CD8-positive, alpha-beta T cell (primary cell): ENCODE measurements at regions of chr14 and their contacts with region 1.

Region 1: GRCh38 chr14:68248481-68249255 is 429.1 kb downstream of the RAD51B start:
- DNase-seq: peak in 3 of 9 experiments; percentile 52 to 79 (median 64)
- ATAC-seq: peak; percentile 79
- H3K4me3 ChIP-seq: no peak overlapping the region
- H3K4me3 Mint-ChIP-seq: no peak overlapping the region
- H3K27ac ChIP-seq: no peak overlapping the region
- H3K27ac Mint-ChIP-seq: peak overlapping the region; percentile 47
- H3K4me1 ChIP-seq: peaks cover 15% of the 10 kb centered on the region
- H3K4me1 Mint-ChIP-seq: peaks cover 30% of the 10 kb centered on the region
- H3K27me3 ChIP-seq: no peaks in the 10 kb centered on the region
- H3K27me3 Mint-ChIP-seq: no peaks in the 10 kb centered on the region
- CTCF ChIP-seq: peak; percentile 67

Region 2: DNA sequence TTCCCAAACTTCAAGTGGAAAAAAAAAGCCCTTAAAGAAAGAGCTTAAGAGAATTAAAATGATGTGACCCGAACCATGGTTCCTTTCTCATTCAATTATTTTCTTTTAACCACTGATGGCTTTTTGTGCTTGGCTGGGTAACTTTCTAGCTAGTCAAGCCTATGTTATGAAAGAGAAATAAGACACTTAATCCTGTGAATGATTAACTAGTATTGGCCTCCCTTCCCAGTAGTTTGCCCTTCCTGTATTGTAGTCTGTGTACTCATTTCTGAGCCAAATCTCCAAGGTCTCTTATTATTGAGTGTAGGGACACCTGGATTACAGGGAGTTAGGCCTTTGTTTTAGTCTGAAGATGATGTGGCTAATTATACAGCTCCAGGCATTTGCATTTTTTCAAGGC is 76.0 kb before region 1 on chr14:
- CTCF ChIA-PET with region 1: no interaction called
- POLR2A ChIA-PET with region 1: no interaction called
- intact Hi-C with region 1: no loop called
- DNase-seq: no peak
- ATAC-seq: no peak
- H3K4me3 ChIP-seq: no peak overlapping the region
- H3K4me3 Mint-ChIP-seq: no peak overlapping the region
- H3K27ac ChIP-seq: no peak overlapping the region
- H3K27ac Mint-ChIP-seq: no peak overlapping the region
- H3K4me1 ChIP-seq: no peaks in the 10 kb centered on the region
- H3K4me1 Mint-ChIP-seq: no peaks in the 10 kb centered on the region
- H3K27me3 ChIP-seq: no peaks in the 10 kb centered on the region
- H3K27me3 Mint-ChIP-seq: no peaks in the 10 kb centered on the region
- CTCF ChIP-seq: no peak

Region 3: GRCh38 chr14:68261092-68261842 is 12.6 kb after region 1 on chr14:
- CTCF ChIA-PET with region 1: interaction called, 12 read pairs
- POLR2A ChIA-PET with region 1: interaction called, 7 read pairs
- intact Hi-C with region 1: no loop called
- DNase-seq: peak in 1 of 9 experiments; percentile 27
- ATAC-seq: no peak
- H3K4me3 ChIP-seq: no peak overlapping the region
- H3K4me3 Mint-ChIP-seq: peak overlapping the region; percentile 54
- H3K27ac ChIP-seq: peak overlapping the region in 1 of 2 experiments; percentile 41
- H3K27ac Mint-ChIP-seq: peak overlapping the region; percentile 91
- H3K4me1 ChIP-seq: peaks cover 48% of the 10 kb centered on the region
- H3K4me1 Mint-ChIP-seq: peaks cover 61% of the 10 kb centered on the region
- H3K27me3 ChIP-seq: no peaks in the 10 kb centered on the region
- H3K27me3 Mint-ChIP-seq: no peaks in the 10 kb centered on the region
- CTCF ChIP-seq: no peak

Region 4: GRCh38 chr14:68408680-68409079 is 160.0 kb after region 1 on chr14:
- CTCF ChIA-PET with region 1: interaction called, 38 read pairs
- POLR2A ChIA-PET with region 1: interaction called, 3 read pairs
- intact Hi-C with region 1: loop called in 1 of 2 experiments (anchors 1 kb)
- DNase-seq: peak in 2 of 9 experiments; percentile 41 to 64
- ATAC-seq: peak; percentile 49
- H3K4me3 ChIP-seq: no peak overlapping the region
- H3K4me3 Mint-ChIP-seq: no peak overlapping the region
- H3K27ac ChIP-seq: no peak overlapping the region
- H3K27ac Mint-ChIP-seq: peak overlapping the region; percentile 4
- H3K4me1 ChIP-seq: peaks cover 25% of the 10 kb centered on the region
- H3K4me1 Mint-ChIP-seq: peaks cover 38% of the 10 kb centered on the region
- H3K27me3 ChIP-seq: no peaks in the 10 kb centered on the region
- H3K27me3 Mint-ChIP-seq: no peaks in the 10 kb centered on the region
- CTCF ChIP-seq: no peak

Region 5: GRCh38 chr14:68685419-68686204 is 436.9 kb after region 1 on chr14:
- CTCF ChIA-PET with region 1: no interaction called
- POLR2A ChIA-PET with region 1: interaction called, 4 read pairs
- intact Hi-C with region 1: loop called (anchors 5 to 10 kb)
- DNase-seq: peak; percentile 67 to 94 (median 84)
- ATAC-seq: peak; percentile 87
- H3K4me3 ChIP-seq: no peak overlapping the region
- H3K4me3 Mint-ChIP-seq: peak overlapping the region; percentile 23
- H3K27ac ChIP-seq: peak overlapping the region; percentile 50 to 70
- H3K27ac Mint-ChIP-seq: peak overlapping the region; percentile 96
- H3K4me1 ChIP-seq: peaks cover 56% of the 10 kb centered on the region
- H3K4me1 Mint-ChIP-seq: peaks cover 70% of the 10 kb centered on the region
- H3K27me3 ChIP-seq: no peaks in the 10 kb centered on the region
- H3K27me3 Mint-ChIP-seq: no peaks in the 10 kb centered on the region
- CTCF ChIP-seq: no peak

Region 6: GRCh38 chr14:68795597-68796417 is 547.1 kb after region 1 on chr14:
- CTCF ChIA-PET with region 1: interaction called, 195 read pairs
- POLR2A ChIA-PET with region 1: interaction called, 54 read pairs
- intact Hi-C with region 1: no loop called
- DNase-seq: peak; percentile 60 to 94 (median 82)
- ATAC-seq: peak; percentile 41
- H3K4me3 ChIP-seq: peak overlapping the region; percentile 94 to 97
- H3K4me3 Mint-ChIP-seq: peak overlapping the region; percentile 92
- H3K27ac ChIP-seq: peak overlapping the region; percentile 99 to 100
- H3K27ac Mint-ChIP-seq: peak overlapping the region; percentile 100
- H3K4me1 ChIP-seq: peaks cover 18% of the 10 kb centered on the region
- H3K4me1 Mint-ChIP-seq: peaks cover 37% of the 10 kb centered on the region
- H3K27me3 ChIP-seq: no peaks in the 10 kb centered on the region
- H3K27me3 Mint-ChIP-seq: no peaks in the 10 kb centered on the region
- CTCF ChIP-seq: peak; percentile 71

Region 7: DNA sequence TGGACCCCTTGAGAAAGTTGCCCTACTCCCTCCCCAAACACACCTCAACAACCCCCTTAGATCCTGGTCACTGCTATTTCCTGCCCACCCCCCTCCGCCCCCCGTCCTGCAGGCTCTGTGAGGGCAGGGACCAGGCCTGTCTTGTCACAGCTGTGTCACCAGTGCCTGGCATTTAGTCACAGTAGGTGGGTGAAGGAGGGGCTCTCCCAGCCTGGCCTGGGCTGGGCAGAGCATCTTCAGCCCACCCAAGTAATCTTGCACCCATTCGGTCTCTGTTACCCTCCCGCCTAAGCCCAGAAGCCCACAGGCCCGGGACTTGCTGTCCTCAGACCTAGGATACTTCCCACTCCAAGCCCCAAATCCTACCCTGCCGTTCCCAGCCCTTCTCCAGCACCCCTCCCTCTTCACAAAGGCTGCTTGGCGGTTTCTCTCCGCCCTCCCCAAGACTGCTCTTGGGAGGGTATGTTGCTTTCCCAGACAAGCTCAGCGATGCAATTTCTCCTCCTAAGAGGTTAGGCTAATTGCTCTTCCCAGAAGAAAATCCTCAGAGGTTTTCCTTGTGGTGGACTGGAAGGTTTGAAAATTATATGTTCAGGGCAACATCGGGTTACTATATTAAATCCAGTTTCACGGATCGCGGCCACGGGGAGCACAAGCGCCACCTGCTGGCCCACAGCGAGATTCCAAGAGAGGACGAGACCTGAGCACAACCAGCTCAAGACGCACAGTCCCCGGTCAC is 595.0 kb after region 1 on chr14:
- CTCF ChIA-PET with region 1: interaction called, 33 read pairs
- POLR2A ChIA-PET with region 1: no interaction called
- intact Hi-C with region 1: loop called (anchors 1 kb)
- DNase-seq: peak; percentile 48 to 85 (median 77)
- ATAC-seq: peak; percentile 89
- H3K4me3 ChIP-seq: no peak overlapping the region
- H3K4me3 Mint-ChIP-seq: peak overlapping the region; percentile 53
- H3K27ac ChIP-seq: no peak overlapping the region
- H3K27ac Mint-ChIP-seq: no peak overlapping the region
- H3K4me1 ChIP-seq: peaks cover 17% of the 10 kb centered on the region
- H3K4me1 Mint-ChIP-seq: peaks cover 20% of the 10 kb centered on the region
- H3K27me3 ChIP-seq: no peaks in the 10 kb centered on the region
- H3K27me3 Mint-ChIP-seq: no peaks in the 10 kb centered on the region
- CTCF ChIP-seq: peak; percentile 89